Mammary epithelial cell (primary cell): ENCODE measurements at regions of chr9 and their contacts with region 1.

Region 1: GRCh38 chr9:86368871-86369521 is 14.8 kb upstream of the TUT7 start:
- DNase-seq: peak; percentile 97
- H3K4me3 ChIP-seq: no peak overlapping the region
- H3K27ac ChIP-seq: peak overlapping the region; percentile 57
- H3K4me1 ChIP-seq: peaks cover 13% of the 10 kb centered on the region
- H3K27me3 ChIP-seq: no peaks in the 10 kb centered on the region
- CTCF ChIP-seq: no peak

Region 2: DNA sequence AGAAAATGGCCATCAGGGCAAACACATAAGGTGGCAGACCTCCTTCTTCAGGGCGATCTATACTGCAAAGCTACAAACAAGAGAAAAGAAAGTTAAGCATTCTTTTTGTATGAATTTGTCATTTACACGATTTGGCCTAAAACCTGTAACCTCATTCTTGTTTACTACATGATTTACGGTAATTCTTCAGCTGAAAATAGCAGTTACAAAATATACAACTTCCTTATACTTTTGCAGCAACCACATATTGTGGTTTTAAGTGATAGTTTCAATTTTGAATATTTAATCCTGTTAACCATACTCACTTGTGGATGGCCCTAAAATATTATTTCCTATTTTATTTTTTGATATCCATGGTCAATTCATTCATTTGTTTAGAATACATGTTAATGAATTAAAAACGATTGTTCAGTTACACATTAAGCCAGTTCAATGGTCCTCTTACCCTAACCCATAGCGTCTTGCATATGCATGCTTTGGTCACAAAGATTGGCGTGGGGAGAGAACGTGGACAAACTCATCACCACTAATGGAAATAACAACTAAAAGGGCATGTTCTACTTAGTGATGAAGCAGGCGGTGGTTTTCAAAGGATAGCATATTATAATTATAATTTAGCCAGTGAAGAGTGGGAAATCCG is 31.4 kb before region 1 on chr9:
- CTCF ChIA-PET with region 1: no interaction called
- dilution Hi-C with region 1: no loop called
- in situ Hi-C with region 1: no loop called
- intact Hi-C with region 1: no loop called
- DNase-seq: no peak
- H3K4me3 ChIP-seq: no peak overlapping the region
- H3K27ac ChIP-seq: no peak overlapping the region
- H3K4me1 ChIP-seq: no peaks in the 10 kb centered on the region
- H3K27me3 ChIP-seq: no peaks in the 10 kb centered on the region
- CTCF ChIP-seq: no peak

Region 3: DNA sequence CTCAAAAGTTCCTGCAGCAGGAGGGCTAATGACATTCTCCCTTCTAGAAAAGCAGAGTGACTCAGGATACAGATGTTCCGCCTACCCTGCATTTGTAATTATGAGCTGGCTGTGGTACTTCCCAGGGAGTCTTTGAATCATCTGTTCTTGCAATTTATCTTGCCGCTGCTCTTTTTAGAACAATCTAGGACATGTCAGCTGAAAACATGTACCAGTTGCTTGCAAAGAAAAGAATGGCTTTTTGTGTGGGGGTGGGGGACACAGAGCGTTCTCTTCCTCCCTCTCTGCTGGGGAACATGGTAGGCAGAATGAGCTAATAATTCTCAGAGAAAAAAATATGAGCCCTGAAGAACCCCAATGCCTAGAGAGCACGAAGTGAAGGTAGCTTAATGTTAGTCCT is 36.9 kb after region 1 on chr9:
- CTCF ChIA-PET with region 1: no interaction called
- dilution Hi-C with region 1: no loop called
- in situ Hi-C with region 1: no loop called
- intact Hi-C with region 1: loop called (anchors 1 kb)
- DNase-seq: peak; percentile 96
- H3K4me3 ChIP-seq: peak overlapping the region; percentile 4 to 15 (median 14)
- H3K27ac ChIP-seq: peak overlapping the region; percentile 93
- H3K4me1 ChIP-seq: peaks cover 34% of the 10 kb centered on the region
- H3K27me3 ChIP-seq: no peaks in the 10 kb centered on the region
- CTCF ChIP-seq: no peak

Region 4: DNA sequence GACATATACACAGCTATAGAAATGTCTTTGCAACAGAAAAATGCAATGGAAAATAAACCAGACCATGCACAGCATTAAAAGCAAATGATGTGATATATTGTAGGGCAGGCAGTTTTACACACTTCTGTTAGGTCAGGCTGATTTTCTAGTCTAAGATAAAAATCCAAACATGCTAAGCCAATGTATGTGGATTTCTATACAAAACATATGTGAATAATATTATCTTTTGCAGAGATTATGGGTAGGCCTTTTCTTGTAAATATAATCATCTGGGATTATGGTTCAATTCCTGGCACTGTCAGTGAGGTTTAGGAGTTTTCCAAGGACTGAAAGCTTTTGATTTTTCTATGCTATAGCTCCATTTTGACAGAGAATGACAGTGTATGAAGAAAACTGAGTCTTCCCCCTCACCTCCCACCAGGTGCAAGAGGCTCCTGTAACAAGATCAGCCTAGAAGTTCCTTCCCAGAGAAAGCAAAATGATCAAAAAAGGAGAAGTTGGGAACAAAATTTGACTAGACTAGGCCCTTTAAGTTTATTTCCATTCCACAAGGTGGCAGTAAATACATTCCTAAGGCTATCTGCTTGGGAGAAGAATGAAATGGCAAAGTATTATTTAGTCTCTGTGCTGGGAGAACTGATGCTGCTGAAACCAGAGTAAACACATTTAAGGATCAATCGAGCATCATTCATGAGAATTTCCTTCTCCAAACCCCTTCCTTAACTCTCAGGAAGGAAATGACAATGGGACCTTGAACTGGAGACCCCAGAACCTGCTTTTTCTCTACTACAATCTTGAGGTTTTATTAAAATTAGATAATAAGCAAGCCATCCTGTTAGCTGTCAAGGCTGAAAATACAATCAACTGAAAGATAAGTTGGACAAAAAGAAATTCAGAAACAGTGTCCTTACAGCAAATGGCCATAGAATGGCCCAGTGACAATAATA is 118.2 kb after region 1 on chr9:
- CTCF ChIA-PET with region 1: no interaction called
- dilution Hi-C with region 1: no loop called
- in situ Hi-C with region 1: no loop called
- intact Hi-C with region 1: no loop called
- DNase-seq: peak; percentile 40
- H3K4me3 ChIP-seq: no peak overlapping the region
- H3K27ac ChIP-seq: no peak overlapping the region
- H3K4me1 ChIP-seq: peaks cover 8% of the 10 kb centered on the region
- H3K27me3 ChIP-seq: no peaks in the 10 kb centered on the region
- CTCF ChIP-seq: peak; percentile 31 to 69